Activated CD4-positive, alpha-beta memory T cell treated with anti-CD3 and anti-CD28 coated beads, Interleukin-2, amount 10 ng/mL, durations not matched to agents 7 days and 5 days (primary cell): ENCODE measurements at regions of chr2 and their contacts with region 1.

Region 1: DNA sequence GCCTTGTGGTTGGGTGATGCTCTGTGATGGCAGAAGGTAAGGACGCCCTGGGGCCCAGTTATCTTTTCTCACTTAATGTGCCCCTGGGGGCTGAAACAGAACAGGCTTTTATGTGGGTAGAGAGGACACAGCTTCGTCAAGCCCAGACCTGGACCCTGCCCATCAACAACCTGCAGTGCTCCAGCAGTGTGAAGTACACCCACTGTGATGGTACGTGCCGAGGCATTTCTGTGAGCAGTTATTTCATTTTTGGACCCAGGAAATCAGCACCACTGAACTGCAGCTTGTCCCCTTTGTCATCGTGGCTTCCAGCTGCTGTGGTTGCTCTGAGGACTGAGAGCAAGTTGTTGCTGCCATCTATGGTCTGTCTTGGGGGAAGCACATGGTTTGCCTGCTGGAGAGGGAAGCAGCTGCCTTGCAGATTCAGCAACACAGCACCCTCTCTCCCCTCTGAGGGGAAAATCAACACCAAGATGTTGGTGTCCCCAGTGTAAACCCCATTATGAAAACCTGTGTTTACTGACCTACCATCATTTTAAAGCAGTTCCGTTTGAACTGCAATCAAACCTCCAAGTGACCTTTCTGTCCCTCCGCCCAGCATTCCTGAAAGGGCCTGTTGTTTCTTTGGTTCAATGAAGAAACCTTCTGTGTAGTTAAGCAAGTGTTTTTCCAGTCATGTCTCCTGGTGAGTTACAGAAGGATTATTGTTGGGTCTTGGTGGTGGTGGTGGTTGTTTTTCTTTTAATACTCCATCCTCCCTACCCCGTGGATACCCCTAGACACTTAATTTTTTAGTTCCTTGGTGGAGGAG is 158.2 kb downstream of the MGAT5 start:
- DNase-seq: peak; percentile 74
- H3K4me3 Mint-ChIP-seq: no peak overlapping the region
- H3K27ac Mint-ChIP-seq: no peak overlapping the region
- H3K4me1 Mint-ChIP-seq: peaks cover 35% of the 10 kb centered on the region
- H3K27me3 Mint-ChIP-seq: no peaks in the 10 kb centered on the region

Region 2: GRCh38 chr2:133886735-133887660 is 525.0 kb before region 1 on chr2:
- CTCF ChIA-PET with region 1: interaction called, 38 read pairs
- POLR2A ChIA-PET with region 1: no interaction called
- DNase-seq: peak; percentile 48
- H3K4me3 Mint-ChIP-seq: no peak overlapping the region
- H3K27ac Mint-ChIP-seq: no peak overlapping the region
- H3K4me1 Mint-ChIP-seq: no peaks in the 10 kb centered on the region
- H3K27me3 Mint-ChIP-seq: peaks cover 2% of the 10 kb centered on the region

Region 3: DNA sequence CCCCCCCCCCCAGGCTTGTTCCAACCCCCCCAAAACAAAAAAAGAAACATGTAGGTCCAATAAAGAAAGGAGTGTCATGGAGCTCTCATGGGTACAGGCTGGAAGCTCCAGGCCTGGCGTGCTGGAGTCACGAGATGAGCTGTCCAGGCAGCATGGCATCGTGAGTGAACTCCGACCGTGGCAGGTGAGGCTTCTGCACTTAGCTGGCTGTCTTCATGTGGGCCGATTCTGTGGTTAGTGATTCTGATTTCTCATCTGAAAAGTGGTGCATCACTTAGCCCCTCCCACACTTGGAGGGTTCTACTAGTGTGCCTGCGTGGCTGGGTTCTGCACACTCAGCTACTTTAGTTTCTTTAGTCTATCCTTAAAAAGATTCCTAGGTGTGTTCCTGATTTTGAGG is 284.5 kb before region 1 on chr2:
- CTCF ChIA-PET with region 1: interaction called, 16 read pairs
- POLR2A ChIA-PET with region 1: no interaction called
- DNase-seq: peak; percentile 56
- H3K4me3 Mint-ChIP-seq: no peak overlapping the region
- H3K27ac Mint-ChIP-seq: no peak overlapping the region
- H3K4me1 Mint-ChIP-seq: peaks cover 59% of the 10 kb centered on the region
- H3K27me3 Mint-ChIP-seq: peaks cover 1% of the 10 kb centered on the region

Region 4: GRCh38 chr2:134138115-134138514 is 273.9 kb before region 1 on chr2:
- CTCF ChIA-PET with region 1: no interaction called
- POLR2A ChIA-PET with region 1: no interaction called
- DNase-seq: no peak
- H3K4me3 Mint-ChIP-seq: no peak overlapping the region
- H3K27ac Mint-ChIP-seq: no peak overlapping the region
- H3K4me1 Mint-ChIP-seq: peaks cover 61% of the 10 kb centered on the region
- H3K27me3 Mint-ChIP-seq: no peaks in the 10 kb centered on the region

Region 5: DNA sequence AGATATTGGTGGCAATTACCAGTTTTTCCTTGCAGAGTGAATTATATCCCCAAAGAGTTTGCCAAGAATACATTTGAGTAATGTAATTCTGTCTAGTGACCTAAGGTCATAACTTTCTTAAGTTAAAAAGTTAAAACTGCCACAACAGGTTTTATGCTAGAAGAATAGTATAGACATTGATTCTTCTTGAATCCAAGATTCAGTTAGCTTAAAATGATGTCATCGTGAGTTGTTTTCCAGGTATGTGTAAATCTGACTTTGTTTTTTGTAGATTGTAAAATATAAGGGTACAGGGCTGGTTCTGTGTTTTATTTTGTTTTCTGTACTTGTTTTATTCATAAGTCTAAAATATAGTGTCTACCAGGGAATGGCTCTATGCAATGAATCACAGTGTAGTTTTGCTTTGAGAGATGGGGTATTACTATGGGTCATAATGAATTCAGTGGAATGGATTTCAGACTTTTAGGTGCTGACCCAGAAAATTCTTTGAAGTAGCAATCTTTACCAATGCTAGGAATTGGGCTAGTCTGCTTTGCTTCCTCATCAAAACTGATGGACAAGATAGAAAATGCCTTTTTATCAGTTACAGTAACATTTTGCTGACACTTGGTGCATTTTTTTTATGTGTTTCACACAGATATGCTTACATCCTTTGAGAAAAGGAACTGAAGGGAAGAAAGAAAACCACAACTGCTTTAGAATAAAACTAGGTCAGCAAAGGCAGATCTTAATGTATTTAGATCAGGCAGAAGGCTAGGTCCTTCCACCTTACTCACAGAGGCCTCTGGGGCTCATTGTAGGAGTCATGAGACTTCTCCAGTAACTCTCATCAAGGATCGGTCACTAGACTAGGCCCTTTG is 178.9 kb before region 1 on chr2:
- CTCF ChIA-PET with region 1: interaction called, 15 read pairs
- POLR2A ChIA-PET with region 1: no interaction called
- DNase-seq: peak; percentile 33
- H3K4me3 Mint-ChIP-seq: peak overlapping the region; percentile 27
- H3K27ac Mint-ChIP-seq: peak overlapping the region; percentile 91
- H3K4me1 Mint-ChIP-seq: peaks cover 75% of the 10 kb centered on the region
- H3K27me3 Mint-ChIP-seq: no peaks in the 10 kb centered on the region

Region 6: GRCh38 chr2:134282629-134283400 is 129.2 kb before region 1 on chr2:
- CTCF ChIA-PET with region 1: interaction called, 10 read pairs
- POLR2A ChIA-PET with region 1: no interaction called
- DNase-seq: peak; percentile 49
- H3K4me3 Mint-ChIP-seq: no peak overlapping the region
- H3K27ac Mint-ChIP-seq: peak overlapping the region; percentile 64
- H3K4me1 Mint-ChIP-seq: peaks cover 37% of the 10 kb centered on the region
- H3K27me3 Mint-ChIP-seq: peaks cover 16% of the 10 kb centered on the region

Region 7: DNA sequence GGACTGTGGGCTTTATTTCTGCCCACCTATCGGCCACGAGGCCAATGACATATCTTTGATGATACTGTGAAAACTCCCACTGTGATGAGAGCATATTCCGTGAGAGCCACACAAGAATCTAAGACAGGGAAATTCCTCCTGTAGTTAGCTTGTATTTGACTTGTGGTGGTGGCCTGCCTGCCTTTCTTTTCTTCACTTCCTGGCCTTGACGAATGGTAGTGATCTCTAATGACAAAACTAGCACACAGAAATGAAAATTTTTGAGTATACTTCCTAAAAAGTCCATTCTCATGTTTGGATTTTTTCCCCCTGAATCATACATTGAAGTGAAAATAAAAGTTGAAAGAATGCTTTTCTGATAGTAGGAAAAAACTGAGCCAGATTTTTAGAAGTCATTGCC is 63.8 kb before region 1 on chr2:
- CTCF ChIA-PET with region 1: no interaction called
- POLR2A ChIA-PET with region 1: no interaction called
- DNase-seq: no peak
- H3K4me3 Mint-ChIP-seq: no peak overlapping the region
- H3K27ac Mint-ChIP-seq: no peak overlapping the region
- H3K4me1 Mint-ChIP-seq: no peaks in the 10 kb centered on the region
- H3K27me3 Mint-ChIP-seq: no peaks in the 10 kb centered on the region